ENCODE measurements at regions of chr22 and their contacts with region 1.

Region 1: DNA sequence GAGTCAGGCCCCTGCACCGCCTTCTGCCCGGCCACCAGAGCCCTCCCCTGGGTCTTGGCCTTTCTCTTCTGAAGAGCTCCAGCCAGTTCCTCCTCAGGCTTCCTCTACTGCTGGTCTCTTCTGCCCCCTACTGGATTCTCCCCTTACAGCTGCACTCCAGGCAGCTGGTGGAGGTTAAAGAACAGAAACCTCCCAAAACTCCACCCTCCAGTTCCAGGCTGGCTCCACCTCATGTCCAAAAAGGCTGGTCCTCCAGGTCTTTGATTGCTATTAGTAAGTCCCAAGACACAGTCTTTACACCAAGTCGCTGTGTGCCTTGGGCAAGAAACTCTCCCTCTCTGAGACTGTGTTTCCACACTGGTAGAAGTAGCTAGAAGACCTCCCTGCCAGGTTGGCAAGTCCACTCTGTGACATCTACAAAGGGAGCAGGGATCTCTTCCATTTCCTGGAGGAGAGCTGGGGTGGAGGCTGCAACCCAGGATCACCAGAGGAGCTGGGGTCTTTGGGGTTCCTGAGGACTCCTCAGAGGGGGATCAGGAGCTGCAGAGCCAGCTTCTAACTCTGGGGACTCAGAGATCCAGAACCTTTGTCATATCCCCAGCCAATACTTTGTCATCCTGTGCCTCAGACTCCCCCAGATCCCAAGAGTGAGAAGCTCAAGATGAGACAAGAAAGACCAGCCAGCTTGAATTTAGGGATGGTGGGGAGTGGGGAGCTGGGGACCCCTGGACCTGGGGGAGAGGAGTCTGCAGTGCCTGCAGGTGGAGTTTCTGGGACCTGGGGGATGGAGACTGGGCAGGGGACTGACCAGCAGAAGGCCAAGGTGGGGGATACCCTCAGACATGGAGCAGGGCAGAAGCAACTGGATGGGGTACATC is 3.4 kb upstream of the IGLL5 start:
- DNase-seq: peak; percentile 64 to 77 (median 71)
- H3K4me3 ChIP-seq: no peak overlapping the region
- H3K4me3 Mint-ChIP-seq: no peak overlapping the region
- H3K27ac ChIP-seq: no peak overlapping the region
- H3K27ac Mint-ChIP-seq: peak overlapping the region in 4 of 7 donors; percentile 13 to 54 (median 29)
- H3K4me1 ChIP-seq: no peaks in the 10 kb centered on the region
- H3K4me1 Mint-ChIP-seq: peaks cover 0 to 3% (median under 1%) of the 10 kb centered on the region in 4 donors
- H3K27me3 ChIP-seq: no peaks in the 10 kb centered on the region
- H3K27me3 Mint-ChIP-seq: peaks cover 2 to 11% of the 10 kb centered on the region in 2 donors

Region 2: GRCh38 chr22:22508274-22509176 is 375.7 kb before region 1 on chr22 and contains the start of gene ZNF280B:
- CTCF ChIA-PET with region 1: no interaction called
- POLR2A ChIA-PET with region 1: no interaction called
- intact Hi-C with region 1: no loop called
- DNase-seq: peak; percentile 73 to 82 (median 80)
- H3K4me3 ChIP-seq: peak within 1 kb of the TSS; percentile 63 to 71
- H3K4me3 Mint-ChIP-seq: peak within 1 kb of the TSS; percentile 76 to 88 (median 83)
- H3K27ac ChIP-seq: peak within 1 kb of the TSS; percentile 21
- H3K27ac Mint-ChIP-seq: peak within 1 kb of the TSS in 6 of 7 donors; percentile 39 to 86 (median 60)
- H3K4me1 ChIP-seq: peaks cover 13% of the 10 kb centered on the region
- H3K4me1 Mint-ChIP-seq: peaks cover 9 to 26% (median 14%) of the 10 kb centered on the region in 4 donors
- H3K27me3 ChIP-seq: no peaks in the 10 kb centered on the region
- H3K27me3 Mint-ChIP-seq: peaks cover 1 to 5% of the 10 kb centered on the region in 2 donors
- total RNA-seq, gene ZNF280B: 2.2 to 2.7 TPM

Region 3: DNA sequence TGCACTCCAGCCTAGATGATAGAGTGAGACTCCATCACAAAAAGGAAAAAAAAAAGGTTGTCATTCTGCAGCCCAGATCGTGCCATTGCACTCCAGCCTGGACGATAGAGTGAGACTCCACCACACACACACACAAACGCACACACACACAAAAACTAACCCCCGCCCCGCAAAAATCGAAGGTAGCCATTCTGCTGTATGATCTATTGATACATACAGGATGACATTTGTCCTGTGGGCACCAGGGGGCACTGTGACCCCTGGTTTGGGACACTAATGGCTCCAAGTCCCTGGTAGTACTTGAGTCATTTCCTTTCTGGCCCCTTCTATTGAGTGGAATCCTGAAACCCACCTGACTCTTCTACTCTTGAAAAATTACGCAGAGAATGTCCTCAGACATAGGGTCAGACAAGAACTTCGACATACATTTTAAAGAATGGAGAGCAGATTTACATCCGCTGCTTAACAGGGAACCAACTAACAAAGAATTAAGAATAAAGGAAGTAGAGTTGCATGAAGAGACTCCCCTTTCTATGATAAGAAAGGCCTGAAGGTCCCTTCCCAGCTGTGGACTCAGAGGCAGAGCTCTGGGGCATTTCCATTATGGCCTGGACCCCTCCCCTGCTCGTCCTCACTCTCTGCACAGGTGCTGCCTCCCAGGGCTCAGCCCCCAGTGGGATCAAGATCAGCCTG is 290.1 kb before region 1 on chr22:
- CTCF ChIA-PET with region 1: interaction called, 36 read pairs
- POLR2A ChIA-PET with region 1: no interaction called
- intact Hi-C with region 1: loop called (anchors 1 kb)
- DNase-seq: peak; percentile 31 to 59 (median 36)
- H3K4me3 ChIP-seq: no peak overlapping the region
- H3K4me3 Mint-ChIP-seq: no peak overlapping the region
- H3K27ac ChIP-seq: no peak overlapping the region
- H3K27ac Mint-ChIP-seq: no peak overlapping the region
- H3K4me1 ChIP-seq: no peaks in the 10 kb centered on the region
- H3K4me1 Mint-ChIP-seq: peaks cover 0 to 4% (median 2%) of the 10 kb centered on the region in 4 donors
- H3K27me3 ChIP-seq: no peaks in the 10 kb centered on the region
- H3K27me3 Mint-ChIP-seq: peaks cover 3 to 6% of the 10 kb centered on the region in 2 donors

Region 4: GRCh38 chr22:22710719-22711531 is 173.3 kb before region 1 on chr22:
- CTCF ChIA-PET with region 1: interaction called, 52 read pairs
- POLR2A ChIA-PET with region 1: no interaction called
- intact Hi-C with region 1: loop called (anchors 1 kb)
- DNase-seq: peak; percentile 54 to 69 (median 64)
- H3K4me3 ChIP-seq: no peak overlapping the region
- H3K4me3 Mint-ChIP-seq: no peak overlapping the region
- H3K27ac ChIP-seq: no peak overlapping the region
- H3K27ac Mint-ChIP-seq: peak overlapping the region in 3 of 7 donors; percentile 29 to 57 (median 36)
- H3K4me1 ChIP-seq: no peaks in the 10 kb centered on the region
- H3K4me1 Mint-ChIP-seq: peaks cover 0 to 3% (median 2%) of the 10 kb centered on the region in 4 donors
- H3K27me3 ChIP-seq: no peaks in the 10 kb centered on the region
- H3K27me3 Mint-ChIP-seq: no peaks in the 10 kb centered on the region

Region 5: DNA sequence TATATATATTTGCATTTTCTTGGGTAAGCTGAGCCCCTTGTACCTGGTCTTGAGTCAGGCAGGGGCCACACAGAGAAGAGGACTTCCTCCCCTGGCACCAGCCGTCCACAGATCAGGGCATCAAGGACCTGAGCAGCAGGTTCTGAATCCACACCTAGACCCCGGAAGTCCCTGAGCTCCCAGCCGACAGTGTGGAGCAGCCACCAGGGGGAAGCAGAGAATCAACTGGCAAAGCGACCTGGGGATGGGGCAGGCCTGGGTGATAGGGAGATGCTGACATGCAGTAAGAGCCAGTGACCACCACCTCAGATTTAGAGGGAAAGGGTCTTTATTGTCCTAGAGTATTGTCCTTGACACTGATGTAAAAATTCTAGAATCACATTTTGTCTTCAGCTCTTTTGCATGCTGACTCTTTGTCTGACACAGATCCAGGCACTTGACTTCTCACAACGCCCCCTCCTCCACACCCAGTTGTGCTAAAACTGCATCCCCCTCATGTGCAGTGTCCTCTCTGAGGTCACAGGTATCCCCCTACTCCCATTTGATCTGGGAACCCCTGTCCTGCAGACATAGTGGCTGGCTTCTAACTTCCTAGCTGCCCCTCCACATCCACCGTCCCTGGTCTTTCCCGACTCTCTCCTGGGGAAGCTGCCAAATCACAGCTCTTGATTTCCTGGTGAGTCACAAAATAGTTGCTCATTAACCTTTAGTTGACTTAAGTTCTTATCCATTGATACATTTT is 130.6 kb before region 1 on chr22:
- CTCF ChIA-PET with region 1: interaction called, 252 read pairs
- POLR2A ChIA-PET with region 1: interaction called, 24 read pairs
- intact Hi-C with region 1: loop called (anchors 1 kb)
- DNase-seq: peak; percentile 73 to 81 (median 77)
- H3K4me3 ChIP-seq: no peak overlapping the region
- H3K4me3 Mint-ChIP-seq: peak overlapping the region in 7 of 8 donors; percentile 50 to 89 (median 81)
- H3K27ac ChIP-seq: peak overlapping the region; percentile 30
- H3K27ac Mint-ChIP-seq: peak overlapping the region; percentile 80 to 94 (median 87)
- H3K4me1 ChIP-seq: peaks cover 47% of the 10 kb centered on the region
- H3K4me1 Mint-ChIP-seq: peaks cover 40 to 63% (median 52%) of the 10 kb centered on the region in 4 donors
- H3K27me3 ChIP-seq: no peaks in the 10 kb centered on the region
- H3K27me3 Mint-ChIP-seq: no peaks in the 10 kb centered on the region

Region 6: GRCh38 chr22:22802339-22802970 is 81.8 kb before region 1 on chr22:
- CTCF ChIA-PET with region 1: interaction called, 431 read pairs
- POLR2A ChIA-PET with region 1: interaction called, 6 read pairs
- intact Hi-C with region 1: no loop called
- DNase-seq: peak in 2 of 5 donors; percentile 24 to 38
- H3K4me3 ChIP-seq: no peak overlapping the region
- H3K4me3 Mint-ChIP-seq: peak overlapping the region in 1 of 8 donors; percentile 31
- H3K27ac ChIP-seq: no peak overlapping the region
- H3K27ac Mint-ChIP-seq: peak overlapping the region in 1 of 7 donors; percentile 50
- H3K4me1 ChIP-seq: no peaks in the 10 kb centered on the region
- H3K4me1 Mint-ChIP-seq: peaks cover 12 to 40% (median 28%) of the 10 kb centered on the region in 4 donors
- H3K27me3 ChIP-seq: no peaks in the 10 kb centered on the region
- H3K27me3 Mint-ChIP-seq: no peaks in the 10 kb centered on the region

Region 7: GRCh38 chr22:22855617-22856308 is 28.5 kb before region 1 on chr22:
- CTCF ChIA-PET with region 1: interaction called, 29 read pairs
- POLR2A ChIA-PET with region 1: interaction called, 3 read pairs
- intact Hi-C with region 1: no loop called
- DNase-seq: peak in 4 of 5 donors; percentile 11 to 25 (median 16)
- H3K4me3 ChIP-seq: no peak overlapping the region
- H3K4me3 Mint-ChIP-seq: no peak overlapping the region
- H3K27ac ChIP-seq: no peak overlapping the region
- H3K27ac Mint-ChIP-seq: peak overlapping the region in 4 of 7 donors; percentile 1 to 74 (median 53)
- H3K4me1 ChIP-seq: no peaks in the 10 kb centered on the region
- H3K4me1 Mint-ChIP-seq: peaks cover 3 to 11% (median 5%) of the 10 kb centered on the region in 4 donors
- H3K27me3 ChIP-seq: no peaks in the 10 kb centered on the region
- H3K27me3 Mint-ChIP-seq: peaks cover 0 to 1% of the 10 kb centered on the region in 2 donors

Region 8: GRCh38 chr22:22959147-22959827 is 75.0 kb after region 1 on chr22:
- CTCF ChIA-PET with region 1: interaction called, 10 read pairs
- POLR2A ChIA-PET with region 1: no interaction called
- intact Hi-C with region 1: loop called (anchors 10 kb)
- DNase-seq: peak; percentile 59 to 76 (median 68)
- H3K4me3 ChIP-seq: no peak overlapping the region
- H3K4me3 Mint-ChIP-seq: no peak overlapping the region
- H3K27ac ChIP-seq: no peak overlapping the region
- H3K27ac Mint-ChIP-seq: peak overlapping the region in 1 of 7 donors; percentile 29
- H3K4me1 ChIP-seq: no peaks in the 10 kb centered on the region
- H3K4me1 Mint-ChIP-seq: peaks cover 0 to 4% (median 2%) of the 10 kb centered on the region in 4 donors
- H3K27me3 ChIP-seq: no peaks in the 10 kb centered on the region
- H3K27me3 Mint-ChIP-seq: peaks cover 11 to 18% of the 10 kb centered on the region in 2 donors